ENCODE measurements at regions of chr4 and their contacts with region 1.

Region 1: DNA sequence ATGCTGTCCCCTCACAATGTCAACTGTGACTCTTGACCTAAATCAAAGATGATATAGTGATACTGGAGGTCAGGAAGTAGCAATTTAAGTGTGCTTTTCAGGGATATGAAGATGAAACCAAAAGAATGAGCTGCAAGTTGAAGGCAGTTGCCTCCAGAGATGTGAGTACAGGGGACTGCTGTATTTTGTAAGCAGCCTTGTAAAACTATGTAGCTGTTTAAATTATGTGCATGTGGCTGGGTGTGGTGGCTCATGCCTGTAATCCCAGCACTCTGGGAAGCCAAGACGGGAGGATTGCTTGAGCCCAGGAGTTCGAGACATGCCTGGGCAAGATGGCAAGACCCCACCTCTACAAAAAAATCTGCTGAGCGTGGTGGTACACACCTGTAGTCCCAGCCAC is 15.1 kb upstream of the TNIP2 start:
- H3K4me3 Mint-ChIP-seq: peak overlapping the region; percentile 39
- H3K27ac Mint-ChIP-seq: peak overlapping the region; percentile 90
- H3K4me1 Mint-ChIP-seq: peaks cover 39% of the 10 kb centered on the region
- H3K27me3 Mint-ChIP-seq: no peaks in the 10 kb centered on the region

Region 2: GRCh38 chr4:2515830-2516550 is 255.3 kb before region 1 on chr4:
- intact Hi-C with region 1: no loop called
- H3K4me3 Mint-ChIP-seq: no peak overlapping the region
- H3K27ac Mint-ChIP-seq: peak overlapping the region; percentile 2
- H3K4me1 Mint-ChIP-seq: peaks cover 1% of the 10 kb centered on the region
- H3K27me3 Mint-ChIP-seq: no peaks in the 10 kb centered on the region

Region 3: GRCh38 chr4:2721586-2721985 is 49.7 kb before region 1 on chr4:
- intact Hi-C with region 1: no loop called
- H3K4me3 Mint-ChIP-seq: no peak overlapping the region
- H3K27ac Mint-ChIP-seq: no peak overlapping the region
- H3K4me1 Mint-ChIP-seq: no peaks in the 10 kb centered on the region
- H3K27me3 Mint-ChIP-seq: no peaks in the 10 kb centered on the region

Region 4: GRCh38 chr4:2785613-2786012 is 14.3 kb after region 1 on chr4:
- intact Hi-C with region 1: loop called (anchors 2 kb)
- H3K4me3 Mint-ChIP-seq: no peak overlapping the region
- H3K27ac Mint-ChIP-seq: peak overlapping the region; percentile 78
- H3K4me1 Mint-ChIP-seq: peaks cover 54% of the 10 kb centered on the region
- H3K27me3 Mint-ChIP-seq: no peaks in the 10 kb centered on the region

Region 5: DNA sequence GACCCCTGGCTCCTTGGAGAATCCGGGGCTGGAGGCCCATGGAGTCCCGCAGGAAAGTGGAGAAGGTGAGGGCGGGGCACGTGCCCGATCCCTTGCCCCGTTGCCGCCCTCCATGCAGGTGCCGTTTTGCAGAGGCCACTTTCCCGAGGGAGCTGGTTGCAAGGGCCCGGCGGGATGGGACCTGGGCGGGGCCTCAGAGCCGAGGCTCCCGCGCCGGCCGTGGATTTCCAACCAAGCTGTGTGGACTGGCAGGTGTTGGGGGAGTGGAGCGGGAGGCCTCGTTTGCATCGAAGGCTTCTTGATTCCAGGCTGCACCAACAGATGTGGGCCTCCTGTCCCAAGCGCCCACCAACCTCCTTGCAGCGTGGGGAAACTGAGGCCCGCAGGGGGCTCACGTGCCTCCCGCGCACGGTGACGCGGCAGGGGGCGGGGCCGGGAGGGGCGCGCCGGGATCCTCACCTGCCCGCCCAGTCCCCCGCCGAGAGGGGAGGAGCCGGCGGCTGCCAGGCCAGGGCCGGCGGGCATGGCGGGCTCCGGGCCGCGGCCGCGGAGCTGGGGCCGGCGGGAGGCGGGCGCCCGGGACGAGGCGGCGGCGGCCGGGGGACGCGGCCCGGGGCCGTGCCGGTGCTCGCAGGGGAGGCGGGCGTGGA is 46.6 kb after region 1 on chr4:
- intact Hi-C with region 1: loop called (anchors 5 kb)
- H3K4me3 Mint-ChIP-seq: peak overlapping the region; percentile 62
- H3K27ac Mint-ChIP-seq: peak overlapping the region; percentile 46
- H3K4me1 Mint-ChIP-seq: peaks cover 73% of the 10 kb centered on the region
- H3K27me3 Mint-ChIP-seq: no peaks in the 10 kb centered on the region

Region 6: GRCh38 chr4:3305598-3306371 is 534.5 kb after region 1 on chr4:
- intact Hi-C with region 1: no loop called
- H3K4me3 Mint-ChIP-seq: no peak overlapping the region
- H3K27ac Mint-ChIP-seq: no peak overlapping the region
- H3K4me1 Mint-ChIP-seq: peaks cover 40% of the 10 kb centered on the region
- H3K27me3 Mint-ChIP-seq: peaks cover 22% of the 10 kb centered on the region